PC-9 (cell line): ENCODE measurements at regions of chr5 and their contacts with region 1.

Region 1: DNA sequence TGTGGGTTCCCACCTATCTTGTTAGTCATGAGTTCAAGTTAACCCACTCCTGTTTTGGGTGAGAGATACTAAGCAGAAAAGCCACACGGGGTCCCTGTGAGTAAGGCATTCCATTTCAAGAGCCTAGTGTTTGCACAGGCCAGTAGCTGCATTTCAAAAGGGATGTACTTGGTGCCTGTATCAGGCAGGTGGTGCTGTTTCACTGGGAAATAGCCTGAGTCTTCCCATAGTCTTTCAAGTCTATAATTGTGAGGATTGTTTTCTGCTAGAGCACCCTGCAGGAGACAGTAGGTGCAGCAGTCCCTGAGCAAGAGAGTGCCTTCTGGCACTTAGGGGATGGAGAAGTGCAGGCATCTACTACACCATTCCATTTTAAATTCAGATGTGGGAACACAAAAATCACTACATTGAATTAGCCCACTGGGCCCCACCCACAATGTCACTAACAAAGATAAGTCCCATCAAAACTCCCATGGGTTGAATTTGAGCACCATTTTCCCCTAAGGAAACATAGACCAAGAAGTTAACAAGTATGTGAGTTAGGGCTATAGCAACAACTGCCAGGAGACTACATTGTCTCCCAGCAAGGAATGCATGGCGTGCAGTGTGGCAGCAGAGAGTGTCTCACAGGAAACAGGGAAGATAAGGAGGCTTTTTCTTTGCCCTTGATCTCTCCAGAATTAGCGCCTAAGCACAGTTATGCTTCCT is 263.2 kb downstream of the COX7C start:
- DNase-seq: peak; percentile 43 to 44
- H3K4me3 ChIP-seq: no peak overlapping the region
- H3K27ac ChIP-seq: no peak overlapping the region
- H3K4me1 ChIP-seq: no peaks in the 10 kb centered on the region
- H3K27me3 ChIP-seq: no peaks in the 10 kb centered on the region
- CTCF ChIP-seq: peak; percentile 73

Region 2: DNA sequence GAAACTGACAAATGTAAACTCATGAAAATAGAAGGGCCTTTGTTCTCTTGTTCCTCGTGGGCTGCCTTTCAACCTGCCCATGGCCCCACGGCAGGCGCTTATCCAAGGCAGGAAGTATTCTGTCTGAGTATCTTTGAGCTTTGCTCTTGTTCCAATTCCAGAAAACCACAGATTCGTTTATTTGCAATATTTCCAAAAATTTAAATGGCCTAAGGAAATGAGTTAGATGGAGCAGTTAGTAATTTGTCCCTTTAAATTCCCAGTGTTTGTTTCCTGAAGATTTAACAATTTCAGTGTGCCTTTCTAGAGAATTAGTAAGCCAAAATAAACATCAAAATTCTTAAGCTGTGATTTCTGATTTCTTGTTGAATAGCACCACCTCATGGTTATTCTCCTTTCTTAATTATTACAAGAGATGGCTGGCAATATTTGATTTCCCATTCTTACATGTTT is 87.4 kb after region 1 on chr5:
- CTCF ChIA-PET with region 1: interaction called, 3 read pairs
- POLR2A ChIA-PET with region 1: no interaction called
- intact Hi-C with region 1: loop called (anchors 2 kb)
- DNase-seq: no peak
- H3K4me3 ChIP-seq: no peak overlapping the region
- H3K27ac ChIP-seq: no peak overlapping the region
- H3K4me1 ChIP-seq: no peaks in the 10 kb centered on the region
- H3K27me3 ChIP-seq: no peaks in the 10 kb centered on the region
- CTCF ChIP-seq: peak; percentile 71

Region 3: DNA sequence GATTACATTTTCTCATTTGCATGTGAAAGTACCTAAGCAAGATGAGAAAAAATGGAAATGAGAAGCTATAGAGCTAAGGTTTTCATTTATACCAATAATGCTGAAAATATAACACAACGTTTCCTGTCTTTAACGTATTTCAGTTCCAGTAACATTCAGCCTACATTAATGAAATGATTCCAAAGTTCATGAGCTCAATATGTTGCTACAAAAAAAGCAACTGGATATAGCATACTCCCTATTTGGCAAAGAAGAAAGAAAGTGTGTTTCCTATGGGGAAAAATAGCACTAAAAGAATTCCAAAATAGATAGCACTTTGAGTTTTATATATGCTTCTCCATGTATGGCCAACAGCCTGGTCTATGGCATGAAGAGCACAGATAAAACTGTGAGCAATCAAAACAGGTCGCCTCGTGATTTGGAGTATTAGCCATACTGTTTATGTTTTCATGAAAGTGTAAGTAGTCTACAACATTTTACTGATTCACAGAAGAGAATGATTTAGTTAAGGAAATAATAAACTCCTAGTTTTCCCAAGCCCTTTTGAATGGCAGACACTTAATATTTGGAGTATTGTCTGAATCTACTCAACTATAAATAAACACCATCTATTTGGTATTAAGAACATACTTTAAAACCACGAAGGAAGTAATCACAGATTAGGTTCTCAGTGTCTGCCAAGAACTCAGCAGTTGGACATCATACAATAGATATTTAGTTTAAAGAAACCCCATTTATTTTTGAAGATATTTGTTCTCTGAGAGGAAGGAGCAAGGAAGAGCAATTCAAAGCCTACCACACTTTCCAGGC is 128.0 kb after region 1 on chr5:
- CTCF ChIA-PET with region 1: no interaction called
- POLR2A ChIA-PET with region 1: no interaction called
- intact Hi-C with region 1: loop called (anchors 1 kb)
- DNase-seq: no peak
- H3K4me3 ChIP-seq: no peak overlapping the region
- H3K27ac ChIP-seq: no peak overlapping the region
- H3K4me1 ChIP-seq: no peaks in the 10 kb centered on the region
- H3K27me3 ChIP-seq: no peaks in the 10 kb centered on the region
- CTCF ChIP-seq: no peak